Astrocyte of the cerebellum (primary cell): ENCODE measurements at regions of chr9 and their contacts with region 1.

Region 1: DNA sequence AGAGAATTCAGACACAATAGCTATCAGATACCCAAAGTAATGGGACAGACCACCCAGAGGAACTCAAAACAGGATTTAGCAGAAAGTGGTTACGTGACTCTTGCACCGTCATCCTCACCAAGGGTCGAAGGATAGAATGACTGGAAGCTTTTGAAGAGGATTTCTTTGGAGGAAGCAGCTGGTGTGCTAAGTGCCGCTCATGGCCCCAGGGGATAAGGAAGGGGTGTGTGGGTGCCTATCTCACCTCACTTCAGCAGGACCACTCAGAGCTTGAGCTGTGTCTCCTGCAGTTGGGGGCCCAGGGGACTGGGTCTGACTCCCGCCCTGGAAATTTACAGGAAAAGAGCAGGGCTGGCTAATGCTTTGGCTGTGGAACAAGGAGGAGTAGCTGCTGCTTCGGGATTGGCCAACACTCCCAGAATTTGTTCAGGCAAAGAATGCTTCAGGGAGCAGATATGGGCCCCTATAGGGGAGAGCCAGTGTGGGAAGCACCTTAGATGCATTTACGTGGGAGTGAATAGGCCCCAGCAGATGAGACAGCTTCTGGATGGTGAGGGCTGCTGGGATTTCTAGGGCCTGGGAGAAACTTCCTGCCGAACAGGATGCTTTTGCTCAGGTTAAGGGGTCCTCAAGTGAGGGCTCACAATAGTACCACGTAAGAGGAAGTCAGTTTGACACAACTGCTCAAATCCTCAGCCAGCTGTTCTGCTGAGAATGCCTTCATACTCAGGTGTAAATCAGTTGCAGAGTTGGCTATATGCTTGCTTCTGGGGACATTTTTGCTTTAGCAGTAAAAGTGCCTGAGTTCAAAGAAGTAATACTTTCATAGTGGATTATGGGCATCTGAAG is 29.1 kb upstream of the TOMM5 start:
- DNase-seq: no peak
- H3K4me3 ChIP-seq: no peak overlapping the region
- CTCF ChIP-seq: no peak

Region 2: GRCh38 chr9:37656936-37657335 is 35.4 kb after region 1 on chr9:
- in situ Hi-C with region 1: loop called (anchors 5 kb)
- DNase-seq: no peak
- H3K4me3 ChIP-seq: no peak overlapping the region
- CTCF ChIP-seq: no peak

Region 3: DNA sequence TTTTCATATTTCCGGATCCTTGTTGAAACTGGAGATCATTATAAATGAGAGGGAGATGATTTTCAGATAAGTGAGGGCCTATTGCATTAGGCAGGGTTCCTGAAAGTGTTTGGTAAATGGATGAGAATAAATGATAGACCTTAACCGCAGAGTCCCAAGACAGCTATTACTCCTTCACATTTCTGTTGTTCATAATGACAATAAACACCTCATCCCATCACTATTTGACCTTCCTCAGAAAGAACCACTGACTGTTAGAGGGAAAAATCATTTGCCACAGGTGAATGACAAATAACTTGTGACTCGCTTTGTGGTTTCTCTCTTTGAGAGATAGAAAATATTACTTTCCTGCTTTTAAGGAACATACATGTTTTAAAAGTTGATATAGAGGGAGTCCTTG is 84.8 kb after region 1 on chr9:
- in situ Hi-C with region 1: loop called (anchors 5 kb)
- DNase-seq: no peak
- H3K4me3 ChIP-seq: no peak overlapping the region
- CTCF ChIP-seq: no peak

Region 4: DNA sequence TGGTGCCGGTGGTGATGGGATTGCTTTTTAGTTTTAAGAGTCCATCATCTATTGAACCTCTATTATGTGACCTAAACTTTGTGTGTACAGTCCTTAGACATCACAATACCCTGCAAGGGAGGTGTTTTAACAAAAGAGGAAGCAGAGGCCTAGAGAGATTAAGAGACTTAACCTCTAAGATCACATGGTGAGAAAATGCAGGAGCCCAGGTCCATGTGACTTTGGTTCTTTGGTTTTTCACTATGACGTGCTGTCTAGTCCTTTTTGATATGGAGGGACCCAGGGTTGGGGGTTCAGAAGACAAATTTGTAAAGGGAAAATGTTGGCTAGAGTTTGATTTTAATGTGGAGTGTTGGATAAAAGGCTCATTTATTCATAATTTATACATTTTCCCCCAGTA is 98.0 kb after region 1 on chr9:
- in situ Hi-C with region 1: no loop called
- DNase-seq: no peak
- H3K4me3 ChIP-seq: no peak overlapping the region
- CTCF ChIP-seq: no peak